ENCODE measurements at regions of chr1 and their contacts with region 1.

Region 1: DNA sequence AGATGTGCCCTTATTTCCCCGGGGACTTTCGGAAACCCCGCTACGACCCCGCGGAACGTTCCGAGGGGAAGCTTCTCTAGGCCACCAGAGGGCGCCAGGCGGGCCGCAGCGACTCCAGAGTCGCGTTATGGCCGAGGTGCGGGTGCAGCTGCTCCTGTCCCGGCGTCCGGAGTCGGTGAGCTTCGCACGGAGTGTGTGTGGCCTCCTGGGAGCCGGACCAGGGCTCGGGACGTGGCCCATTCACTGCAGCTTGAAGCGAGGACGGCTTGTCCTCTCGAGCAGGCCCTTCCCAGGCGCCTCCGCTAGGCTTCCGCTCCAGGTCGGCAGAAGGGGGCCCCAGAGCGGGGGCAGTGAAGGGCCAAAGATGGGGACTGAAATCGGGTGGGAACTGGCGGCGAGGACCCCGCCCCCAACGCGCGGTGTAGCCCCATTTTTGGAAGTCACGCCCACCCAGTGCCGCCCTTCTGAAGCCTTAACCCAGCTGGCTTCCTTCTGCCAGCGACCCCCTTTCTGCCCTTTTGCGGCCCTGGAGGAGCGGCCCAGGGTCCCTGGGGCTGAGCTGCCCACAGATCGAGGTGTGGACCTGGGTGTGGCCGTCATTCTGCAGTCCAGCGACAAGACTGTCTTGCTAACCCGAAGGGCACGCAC is at the start of gene NUDT17:
- DNase-seq: peak; percentile 91
- ATAC-seq: peak; percentile 72
- H3K4me3 ChIP-seq: peak within 1 kb of the TSS; percentile 57 to 85 (median 70)
- H3K4me3 Mint-ChIP-seq: no peak within 1 kb of the TSS
- H3K27ac ChIP-seq: peak within 1 kb of the TSS; percentile 73 to 76
- H3K27ac Mint-ChIP-seq: no peak within 1 kb of the TSS
- H3K4me1 ChIP-seq: peaks cover 18 to 24% of the 10 kb centered on the region in 2 donors
- H3K4me1 Mint-ChIP-seq: peaks cover 7% of the 10 kb centered on the region
- H3K27me3 ChIP-seq: no peaks in the 10 kb centered on the region
- H3K27me3 Mint-ChIP-seq: no peaks in the 10 kb centered on the region
- CTCF ChIP-seq: peak; percentile 90
- total RNA-seq, gene NUDT17: 7.1 and 7.7 TPM in 2 replicates

Region 2: DNA sequence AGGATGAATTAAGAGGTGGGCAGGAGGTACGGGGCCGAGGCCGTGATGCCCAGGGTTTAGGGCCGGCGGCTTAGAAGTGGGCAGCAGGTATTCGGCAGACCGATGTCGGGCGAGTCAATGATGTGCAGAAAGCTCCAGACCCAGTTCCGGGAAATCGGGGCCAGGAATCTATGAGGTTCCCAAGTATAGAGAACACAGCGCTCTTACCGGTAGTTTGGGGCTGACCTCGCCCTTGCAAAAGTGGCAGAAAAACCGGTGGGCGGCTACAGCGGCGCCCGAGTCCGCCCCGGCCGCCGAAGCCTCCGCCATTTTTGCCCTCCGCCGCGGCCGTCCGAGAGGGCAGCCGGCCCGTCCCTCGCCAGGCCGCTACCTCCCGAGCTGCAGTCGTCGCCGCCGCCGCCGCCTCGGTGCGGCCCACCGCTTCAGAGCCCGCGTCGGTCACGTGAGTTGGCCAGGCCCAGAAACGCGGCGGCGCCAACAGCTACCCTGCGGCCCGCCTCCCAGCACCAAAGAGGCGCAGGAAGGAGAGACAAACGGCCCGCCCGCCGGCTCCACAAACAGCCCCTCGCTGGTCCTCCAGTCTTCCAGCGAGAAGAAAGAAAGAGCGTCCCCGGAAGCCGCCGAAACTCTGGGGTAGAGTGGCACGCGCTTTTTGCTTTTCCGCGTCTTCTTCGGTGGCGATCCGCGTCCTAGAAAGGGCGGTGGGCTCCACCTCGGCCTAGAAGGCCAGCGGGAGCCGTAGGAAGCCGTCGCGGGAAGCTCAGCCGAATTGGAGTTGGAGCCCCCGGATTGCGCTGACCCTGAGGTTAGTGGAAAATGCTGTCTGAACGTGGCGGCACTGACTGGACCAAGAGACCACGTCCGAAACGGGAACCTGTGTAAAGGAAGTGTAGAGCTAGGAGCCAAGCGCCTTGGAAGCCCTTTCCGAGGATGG is 21.8 kb before region 1 on chr1 and contains the starts of genes POLR3C and RNF115:
- CTCF ChIA-PET with region 1: interaction called, 15 read pairs
- POLR2A ChIA-PET with region 1: interaction called, 14 read pairs
- intact Hi-C with region 1: loop called (anchors 1 kb)
- DNase-seq: peak; percentile 91
- ATAC-seq: peak; percentile 95
- H3K4me3 ChIP-seq: peak within 1 kb of the TSS; percentile 66 to 97 (median 82)
- H3K4me3 Mint-ChIP-seq: peak within 1 kb of the TSS; percentile 98
- H3K27ac ChIP-seq: peak within 1 kb of the TSS; percentile 61 to 89
- H3K27ac Mint-ChIP-seq: peak within 1 kb of the TSS; percentile 97
- H3K4me1 ChIP-seq: peaks cover 12 to 13% of the 10 kb centered on the region in 2 donors
- H3K4me1 Mint-ChIP-seq: peaks cover 28% of the 10 kb centered on the region
- H3K27me3 ChIP-seq: no peaks in the 10 kb centered on the region
- H3K27me3 Mint-ChIP-seq: no peaks in the 10 kb centered on the region
- CTCF ChIP-seq: no peak
- total RNA-seq, gene POLR3C: 48.0 and 49.3 TPM in 2 replicates
- total RNA-seq, gene RNF115: 19.8 and 21.7 TPM in 2 replicates

Region 3: DNA sequence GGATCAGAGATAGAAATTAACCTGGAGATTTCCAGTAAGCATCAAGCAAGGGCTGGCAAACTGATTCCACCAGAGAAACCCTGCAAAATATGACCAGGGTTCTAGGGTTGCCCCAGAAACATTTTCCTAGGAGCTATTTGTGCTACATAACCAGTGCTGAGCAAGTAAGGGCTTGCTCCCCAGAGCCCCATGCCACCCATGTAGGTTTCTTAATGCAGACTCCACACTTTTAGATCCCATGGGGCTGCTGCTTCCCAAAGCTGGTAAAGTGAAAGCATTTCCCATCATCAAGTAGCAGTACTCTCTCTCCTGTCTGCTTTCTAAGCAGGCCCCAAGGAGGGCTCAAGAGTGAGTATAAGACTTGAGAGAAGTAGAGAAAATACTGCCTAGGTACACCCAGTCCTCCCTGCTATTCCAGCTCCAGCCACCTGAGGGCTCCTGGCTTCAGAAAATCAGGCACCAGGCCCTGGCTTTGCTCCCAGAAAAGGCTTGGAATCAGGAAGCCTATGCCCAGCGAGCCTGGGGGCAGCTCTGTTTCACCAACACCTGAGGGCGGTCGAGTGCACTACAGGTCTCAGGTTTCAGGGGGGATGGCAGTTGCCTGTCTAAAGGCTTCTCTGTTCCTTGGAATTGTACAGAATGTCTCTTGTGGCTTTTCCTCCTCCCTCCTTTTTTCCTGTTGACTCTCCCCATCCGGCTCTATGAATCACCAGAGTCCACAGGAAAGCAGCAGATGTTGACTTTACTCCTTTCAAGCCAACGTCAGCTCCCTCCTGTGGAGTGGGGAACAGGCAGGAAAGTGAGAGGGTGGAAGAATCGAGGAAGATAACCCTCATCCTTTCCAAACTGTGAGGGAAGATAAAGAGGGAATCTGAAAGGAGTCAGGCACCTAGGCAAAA is 46.2 kb after region 1 on chr1:
- CTCF ChIA-PET with region 1: interaction called, 19 read pairs
- POLR2A ChIA-PET with region 1: no interaction called
- intact Hi-C with region 1: loop called (anchors 5 kb)
- DNase-seq: peak; percentile 61
- ATAC-seq: peak; percentile 70
- H3K4me3 ChIP-seq: no peak overlapping the region
- H3K4me3 Mint-ChIP-seq: no peak overlapping the region
- H3K27ac ChIP-seq: no peak overlapping the region
- H3K27ac Mint-ChIP-seq: no peak overlapping the region
- H3K4me1 ChIP-seq: no peaks in the 10 kb centered on the region
- H3K4me1 Mint-ChIP-seq: peaks cover under 1% of the 10 kb centered on the region
- H3K27me3 ChIP-seq: no peaks in the 10 kb centered on the region
- H3K27me3 Mint-ChIP-seq: no peaks in the 10 kb centered on the region
- CTCF ChIP-seq: peak; percentile 72

Region 4: GRCh38 chr1:145918144-145918992 is 72.7 kb after region 1 on chr1 and contains the start of gene PEX11B:
- CTCF ChIA-PET with region 1: interaction called, 107 read pairs
- POLR2A ChIA-PET with region 1: interaction called, 3 read pairs
- intact Hi-C with region 1: loop called (anchors 1 kb)
- DNase-seq: peak; percentile 97
- ATAC-seq: peak; percentile 90
- H3K4me3 ChIP-seq: peak within 1 kb of the TSS; percentile 69 to 98 (median 80)
- H3K4me3 Mint-ChIP-seq: peak within 1 kb of the TSS; percentile 92
- H3K27ac ChIP-seq: peak within 1 kb of the TSS; percentile 74 to 79
- H3K27ac Mint-ChIP-seq: peak within 1 kb of the TSS; percentile 95
- H3K4me1 ChIP-seq: peaks cover 15 to 24% of the 10 kb centered on the region in 2 donors
- H3K4me1 Mint-ChIP-seq: peaks cover 36% of the 10 kb centered on the region
- H3K27me3 ChIP-seq: no peaks in the 10 kb centered on the region
- H3K27me3 Mint-ChIP-seq: no peaks in the 10 kb centered on the region
- CTCF ChIP-seq: no peak
- total RNA-seq, gene PEX11B: 39.1 and 48.1 TPM in 2 replicates

Region 5: GRCh38 chr1:145957443-145958319 is 112.0 kb after region 1 on chr1 and contains the start of gene LIX1L:
- CTCF ChIA-PET with region 1: interaction called, 10 read pairs
- POLR2A ChIA-PET with region 1: no interaction called
- intact Hi-C with region 1: no loop called
- DNase-seq: peak; percentile 96
- ATAC-seq: peak; percentile 89
- H3K4me3 ChIP-seq: peak within 1 kb of the TSS; percentile 64 to 88 (median 74)
- H3K4me3 Mint-ChIP-seq: peak within 1 kb of the TSS; percentile 99
- H3K27ac ChIP-seq: peak within 1 kb of the TSS; percentile 36 to 83
- H3K27ac Mint-ChIP-seq: peak within 1 kb of the TSS; percentile 96
- H3K4me1 ChIP-seq: peaks cover 45 to 65% of the 10 kb centered on the region in 2 donors
- H3K4me1 Mint-ChIP-seq: peaks cover 76% of the 10 kb centered on the region
- H3K27me3 ChIP-seq: no peaks in the 10 kb centered on the region
- H3K27me3 Mint-ChIP-seq: no peaks in the 10 kb centered on the region
- CTCF ChIP-seq: no peak
- total RNA-seq, gene LIX1L: 31.7 and 32.2 TPM in 2 replicates

Region 6: GRCh38 chr1:146019231-146020057 is 173.8 kb after region 1 on chr1:
- CTCF ChIA-PET with region 1: interaction called, 20 read pairs
- POLR2A ChIA-PET with region 1: no interaction called
- intact Hi-C with region 1: no loop called
- DNase-seq: no peak
- ATAC-seq: no peak
- H3K4me3 ChIP-seq: peak overlapping the region in 2 of 5 experiments; percentile 15 to 22
- H3K4me3 Mint-ChIP-seq: peak overlapping the region; percentile 52
- H3K27ac ChIP-seq: no peak overlapping the region
- H3K27ac Mint-ChIP-seq: no peak overlapping the region
- H3K4me1 ChIP-seq: peaks cover 10 to 19% of the 10 kb centered on the region in 2 donors
- H3K4me1 Mint-ChIP-seq: peaks cover 10% of the 10 kb centered on the region
- H3K27me3 ChIP-seq: peaks cover 0 to 46% (median 32%) of the 10 kb centered on the region in 4 experiments
- H3K27me3 Mint-ChIP-seq: peaks cover 60% of the 10 kb centered on the region
- CTCF ChIP-seq: no peak

Measured in B cell (primary cell).